ENCODE measurements at regions of chr2 and their contacts with region 1.

Region 1: GRCh38 chr2:26088032-26088643 is 54.3 kb downstream of the RAB10 start:
- DNase-seq: peak; percentile 27
- ATAC-seq: peak; percentile 66
- H3K4me3 Mint-ChIP-seq: no peak overlapping the region
- H3K27ac Mint-ChIP-seq: no peak overlapping the region
- H3K4me1 Mint-ChIP-seq: peaks cover 56% of the 10 kb centered on the region
- H3K27me3 Mint-ChIP-seq: no peaks in the 10 kb centered on the region

Region 2: DNA sequence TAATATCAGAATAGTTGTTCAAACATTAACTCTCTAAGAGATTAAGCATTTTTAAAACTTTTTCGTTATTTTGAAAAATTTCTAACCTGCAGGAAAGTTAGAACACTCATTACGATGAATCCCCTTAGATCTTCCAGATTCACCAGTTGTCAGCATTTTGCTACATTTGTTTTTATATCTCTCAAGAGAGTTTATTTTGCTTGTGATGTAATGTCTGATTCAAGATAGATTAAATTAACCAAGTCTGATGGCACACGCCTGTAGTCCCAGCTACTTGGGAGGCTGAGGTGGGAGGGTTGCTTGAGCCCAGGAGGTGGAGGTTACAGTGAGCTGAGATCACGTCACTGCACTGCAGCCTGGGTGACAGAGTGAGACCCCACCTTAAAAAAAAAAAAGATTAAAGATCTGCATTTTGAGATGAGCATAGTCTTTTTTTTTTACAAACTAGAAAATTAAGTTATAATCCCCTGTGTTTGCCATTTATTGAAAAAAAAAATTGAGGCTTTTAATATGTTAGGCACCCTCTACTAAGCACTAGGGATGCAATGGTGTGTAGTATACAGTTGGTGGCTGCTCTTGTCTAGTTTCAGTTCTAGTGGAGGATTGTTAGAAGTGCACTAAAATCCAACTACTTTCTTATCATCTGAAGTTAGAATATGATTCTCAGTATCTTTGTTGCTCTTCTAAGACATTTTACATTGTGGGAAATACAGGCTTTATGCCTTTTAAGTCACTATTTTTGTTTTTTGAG is 33.4 kb before region 1 on chr2:
- CTCF ChIA-PET with region 1: interaction called, 4 read pairs
- POLR2A ChIA-PET with region 1: interaction called, 10 read pairs
- intact Hi-C with region 1: no loop called
- DNase-seq: no peak
- ATAC-seq: peak; percentile 64
- H3K4me3 Mint-ChIP-seq: no peak overlapping the region
- H3K27ac Mint-ChIP-seq: no peak overlapping the region
- H3K4me1 Mint-ChIP-seq: peaks cover 77% of the 10 kb centered on the region
- H3K27me3 Mint-ChIP-seq: no peaks in the 10 kb centered on the region

Region 3: GRCh38 chr2:26068602-26069298 is 19.4 kb before region 1 on chr2:
- CTCF ChIA-PET with region 1: interaction called, 7 read pairs
- POLR2A ChIA-PET with region 1: interaction called, 5 read pairs
- intact Hi-C with region 1: loop called (anchors 1 kb)
- DNase-seq: peak; percentile 73
- ATAC-seq: peak; percentile 96
- H3K4me3 Mint-ChIP-seq: peak overlapping the region; percentile 41
- H3K27ac Mint-ChIP-seq: peak overlapping the region; percentile 89
- H3K4me1 Mint-ChIP-seq: peaks cover 58% of the 10 kb centered on the region
- H3K27me3 Mint-ChIP-seq: no peaks in the 10 kb centered on the region

Region 4: GRCh38 chr2:26075963-26076605 is 12.1 kb before region 1 on chr2:
- CTCF ChIA-PET with region 1: interaction called, 13 read pairs
- POLR2A ChIA-PET with region 1: interaction called, 5 read pairs
- intact Hi-C with region 1: no loop called
- DNase-seq: no peak
- ATAC-seq: no peak
- H3K4me3 Mint-ChIP-seq: no peak overlapping the region
- H3K27ac Mint-ChIP-seq: no peak overlapping the region
- H3K4me1 Mint-ChIP-seq: peaks cover 33% of the 10 kb centered on the region
- H3K27me3 Mint-ChIP-seq: no peaks in the 10 kb centered on the region

Region 5: DNA sequence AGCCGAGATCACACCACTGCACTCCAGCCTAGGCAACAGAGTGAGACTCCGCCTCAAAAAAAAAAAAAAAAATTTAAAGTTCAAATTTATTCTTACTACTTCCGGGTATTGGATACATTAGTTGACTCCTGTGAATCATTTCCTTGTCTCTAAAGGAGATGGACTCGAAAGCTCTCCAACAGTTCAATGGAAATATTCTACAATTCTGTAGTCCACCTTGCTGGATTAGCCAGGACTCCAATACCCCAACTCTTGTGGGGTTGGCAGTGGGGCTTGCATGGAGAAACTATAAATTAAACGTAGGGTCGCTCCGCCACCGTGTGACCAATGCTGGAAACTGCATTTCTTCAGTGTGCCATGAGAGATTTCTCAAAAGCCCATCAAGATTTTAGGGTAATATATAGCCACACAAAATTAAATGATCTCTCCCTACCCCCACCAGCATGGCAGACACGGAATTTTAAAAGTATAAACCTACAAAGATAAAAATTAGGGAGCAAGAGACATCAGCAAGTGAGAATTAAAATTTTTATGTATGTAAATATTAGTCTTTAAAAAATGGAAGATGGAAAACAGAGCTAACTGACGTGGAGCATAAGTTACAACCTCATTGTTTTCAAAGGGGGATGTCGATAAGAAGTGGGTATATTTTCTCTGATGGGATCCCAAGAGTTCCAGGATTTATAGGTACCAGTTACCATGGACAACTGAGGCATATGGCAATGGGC is 57.0 kb after region 1 on chr2:
- CTCF ChIA-PET with region 1: interaction called, 11 read pairs
- POLR2A ChIA-PET with region 1: no interaction called
- intact Hi-C with region 1: loop called (anchors 1 kb)
- DNase-seq: peak; percentile 80
- ATAC-seq: peak; percentile 76
- H3K4me3 Mint-ChIP-seq: no peak overlapping the region
- H3K27ac Mint-ChIP-seq: no peak overlapping the region
- H3K4me1 Mint-ChIP-seq: no peaks in the 10 kb centered on the region
- H3K27me3 Mint-ChIP-seq: peaks cover 10% of the 10 kb centered on the region

Region 6: GRCh38 chr2:26300234-26300925 is 212.2 kb after region 1 on chr2:
- CTCF ChIA-PET with region 1: no interaction called
- POLR2A ChIA-PET with region 1: no interaction called
- intact Hi-C with region 1: no loop called
- DNase-seq: peak; percentile 27
- ATAC-seq: peak; percentile 48
- H3K4me3 Mint-ChIP-seq: no peak overlapping the region
- H3K27ac Mint-ChIP-seq: no peak overlapping the region
- H3K4me1 Mint-ChIP-seq: no peaks in the 10 kb centered on the region
- H3K27me3 Mint-ChIP-seq: no peaks in the 10 kb centered on the region

Region 7: GRCh38 chr2:26330113-26330549 is 242.0 kb after region 1 on chr2:
- CTCF ChIA-PET with region 1: no interaction called
- POLR2A ChIA-PET with region 1: no interaction called
- intact Hi-C with region 1: loop called in 1 of 2 experiments (anchors 1 kb)
- DNase-seq: peak; percentile 94
- ATAC-seq: peak; percentile 97
- H3K4me3 Mint-ChIP-seq: no peak overlapping the region
- H3K27ac Mint-ChIP-seq: no peak overlapping the region
- H3K4me1 Mint-ChIP-seq: peaks cover 9% of the 10 kb centered on the region
- H3K27me3 Mint-ChIP-seq: no peaks in the 10 kb centered on the region